ENCODE measurements at regions of chr11 and their contacts with region 1.

Region 1: GRCh38 chr11:45252134-45252855 is 33.8 kb downstream of the SYT13 start:
- DNase-seq: peak; percentile 60
- ATAC-seq: peak; percentile 97
- H3K4me3 ChIP-seq: no peak overlapping the region
- H3K27ac ChIP-seq: no peak overlapping the region
- H3K4me1 ChIP-seq: no peaks in the 10 kb centered on the region
- H3K27me3 ChIP-seq: no peaks in the 10 kb centered on the region
- CTCF ChIP-seq: peak; percentile 85

Region 2: DNA sequence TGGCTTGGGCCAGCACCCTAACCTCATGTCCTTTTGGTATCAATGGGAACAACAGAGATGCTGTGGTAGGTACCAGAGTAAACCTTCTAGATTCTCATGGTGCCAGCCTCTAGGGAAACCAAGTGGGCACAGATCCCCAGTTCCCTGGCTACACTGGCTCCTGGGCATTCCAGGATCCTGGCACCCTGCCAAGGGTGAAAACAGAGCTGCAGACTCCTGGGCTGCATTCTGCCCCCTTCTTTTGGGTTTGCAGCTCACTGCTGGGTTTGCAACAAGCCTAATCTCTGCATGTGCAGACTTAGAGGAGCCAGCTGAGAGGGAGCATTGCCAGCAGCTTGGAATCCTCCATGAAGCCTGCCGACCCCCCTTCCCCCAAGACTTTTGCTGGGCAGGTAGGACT is 75.3 kb before region 1 on chr11:
- CTCF ChIA-PET with region 1: no interaction called
- POLR2A ChIA-PET with region 1: no interaction called
- intact Hi-C with region 1: no loop called
- DNase-seq: no peak
- ATAC-seq: no peak
- H3K4me3 ChIP-seq: no peak overlapping the region
- H3K27ac ChIP-seq: no peak overlapping the region
- H3K4me1 ChIP-seq: peaks cover 9% of the 10 kb centered on the region; the same call in 1 of the 2 replicates
- H3K27me3 ChIP-seq: no peaks in the 10 kb centered on the region
- CTCF ChIP-seq: no peak

Region 3: DNA sequence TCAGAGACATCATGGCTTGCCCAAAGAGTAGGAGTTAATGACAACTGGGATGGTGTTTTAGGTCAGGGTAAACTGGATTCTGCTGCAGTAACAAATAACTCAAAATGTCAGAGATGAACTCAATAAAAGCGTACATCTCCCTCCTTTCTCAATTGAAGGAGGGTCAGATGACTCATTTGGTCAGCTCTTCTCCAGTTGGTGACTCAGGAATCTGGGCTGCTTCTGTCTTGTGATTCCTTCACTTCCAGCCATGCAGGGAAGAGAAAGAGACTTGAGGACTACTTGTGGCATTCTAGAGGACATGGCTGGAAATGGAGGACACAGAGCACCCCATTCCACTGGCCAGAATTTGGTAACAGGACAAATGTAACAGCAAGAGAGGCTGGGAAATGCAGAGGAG is 37.1 kb after region 1 on chr11:
- CTCF ChIA-PET with region 1: interaction called, 3 read pairs
- POLR2A ChIA-PET with region 1: no interaction called
- intact Hi-C with region 1: loop called (anchors 1 kb)
- DNase-seq: peak; percentile 60
- ATAC-seq: peak; percentile 45
- H3K4me3 ChIP-seq: no peak overlapping the region
- H3K27ac ChIP-seq: no peak overlapping the region
- H3K4me1 ChIP-seq: no peaks in the 10 kb centered on the region
- H3K27me3 ChIP-seq: peaks cover 33% of the 10 kb centered on the region
- CTCF ChIP-seq: no peak

Region 4: GRCh38 chr11:45332276-45332934 is 80.1 kb after region 1 on chr11:
- CTCF ChIA-PET with region 1: no interaction called
- POLR2A ChIA-PET with region 1: no interaction called
- intact Hi-C with region 1: loop called (anchors 1 kb)
- DNase-seq: peak; percentile 51
- ATAC-seq: peak; percentile 70
- H3K4me3 ChIP-seq: no peak overlapping the region
- H3K27ac ChIP-seq: no peak overlapping the region
- H3K4me1 ChIP-seq: peaks cover 13% of the 10 kb centered on the region
- H3K27me3 ChIP-seq: peaks cover 6% of the 10 kb centered on the region; the same call in 1 of the 2 replicates
- CTCF ChIP-seq: peak; percentile 60

Measured in PC-3 (cell line).